ENCODE measurements at regions of chr7 and their contacts with region 1.

Region 1: GRCh38 chr7:87628780-87629569 is 777 bp downstream of the RUNDC3B start:
- DNase-seq: peak; percentile 44
- ATAC-seq: peak; percentile 18
- H3K4me3 Mint-ChIP-seq: peak overlapping the region; percentile 83
- H3K27ac Mint-ChIP-seq: no peak overlapping the region
- H3K4me1 Mint-ChIP-seq: peaks cover 11% of the 10 kb centered on the region
- H3K27me3 Mint-ChIP-seq: peaks cover 8% of the 10 kb centered on the region
- CTCF ChIP-seq: no peak

Region 2: GRCh38 chr7:87345166-87345927 is 283.6 kb before region 1 on chr7 and contains the start of gene CROT:
- CTCF ChIA-PET with region 1: no interaction called
- POLR2A ChIA-PET with region 1: no interaction called
- intact Hi-C with region 1: loop called (anchors 1 kb)
- DNase-seq: peak; percentile 95
- ATAC-seq: peak; percentile 98
- H3K4me3 Mint-ChIP-seq: peak within 1 kb of the TSS; percentile 96
- H3K27ac Mint-ChIP-seq: peak within 1 kb of the TSS; percentile 96
- H3K4me1 Mint-ChIP-seq: peaks cover 25% of the 10 kb centered on the region
- H3K27me3 Mint-ChIP-seq: no peaks in the 10 kb centered on the region
- CTCF ChIP-seq: no peak
- total RNA-seq, gene CROT: 7.9 and 9.2 TPM in 2 replicates

Region 3: DNA sequence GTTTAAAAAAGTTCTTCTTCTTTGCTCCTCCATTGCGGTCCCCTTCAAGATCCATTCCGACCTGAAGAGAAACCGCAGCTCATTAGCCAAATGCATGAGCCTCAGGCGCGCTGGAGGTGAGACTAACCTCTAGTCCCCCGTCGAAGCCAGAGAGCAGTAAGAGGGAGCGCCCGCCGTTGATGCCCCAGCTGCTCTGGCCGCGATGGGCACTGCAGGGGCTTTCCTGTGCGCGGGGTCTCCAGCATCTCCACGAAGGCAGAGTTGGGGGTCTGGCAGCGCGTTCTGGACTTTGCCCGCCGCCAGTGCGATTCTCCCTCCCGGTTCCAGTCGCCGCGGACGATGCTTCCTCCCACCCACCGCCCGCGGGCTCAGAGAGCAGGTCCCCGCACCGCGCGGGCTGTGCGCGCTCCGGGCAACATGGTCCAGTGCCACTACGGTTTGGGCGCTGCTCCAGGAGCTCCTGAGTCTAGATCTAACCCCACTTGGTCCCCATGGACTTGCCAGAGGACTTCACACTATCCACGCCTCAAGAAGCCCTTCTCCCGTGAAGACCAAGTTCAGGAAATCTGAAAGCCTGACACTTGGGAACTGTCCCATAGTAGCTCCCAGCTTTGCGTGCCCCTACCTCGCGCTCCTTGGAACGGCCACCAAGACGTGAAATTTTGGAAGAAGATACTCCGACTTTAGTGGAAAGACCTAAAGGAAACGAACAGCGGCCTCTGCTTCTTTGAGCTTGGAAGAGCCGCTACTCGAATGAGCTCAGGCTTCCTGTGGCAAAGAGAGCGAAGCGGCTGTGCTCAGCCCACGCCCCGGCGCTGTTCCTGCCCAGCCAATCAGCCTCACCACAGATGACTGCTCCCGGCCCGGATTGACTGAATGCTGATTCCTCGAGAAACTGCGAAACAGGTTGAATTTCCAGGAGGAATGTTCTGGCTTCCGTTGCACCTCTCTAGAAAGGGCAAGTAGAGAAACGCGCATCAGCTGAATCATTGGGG is 28.5 kb before region 1 on chr7 and contains the start of gene ABCB1:
- CTCF ChIA-PET with region 1: interaction called, 4 read pairs
- POLR2A ChIA-PET with region 1: interaction called, 12 read pairs
- intact Hi-C with region 1: loop called (anchors 1 kb)
- DNase-seq: peak; percentile 37
- ATAC-seq: peak; percentile 73
- H3K4me3 Mint-ChIP-seq: peak within 1 kb of the TSS; percentile 89
- H3K27ac Mint-ChIP-seq: peak within 1 kb of the TSS; percentile 76
- H3K4me1 Mint-ChIP-seq: peaks cover 22% of the 10 kb centered on the region
- H3K27me3 Mint-ChIP-seq: peaks cover 33% of the 10 kb centered on the region
- CTCF ChIP-seq: no peak
- total RNA-seq, gene ABCB1: 4.1 and 4.7 TPM in 2 replicates

Region 4: GRCh38 chr7:87933945-87934698 is 305.1 kb after region 1 on chr7 and contains the start of gene ADAM22:
- CTCF ChIA-PET with region 1: no interaction called
- POLR2A ChIA-PET with region 1: no interaction called
- intact Hi-C with region 1: loop called (anchors 2 kb)
- DNase-seq: peak; percentile 68
- ATAC-seq: peak; percentile 97
- H3K4me3 Mint-ChIP-seq: peak within 1 kb of the TSS; percentile 89
- H3K27ac Mint-ChIP-seq: peak within 1 kb of the TSS; percentile 32
- H3K4me1 Mint-ChIP-seq: peaks cover 14% of the 10 kb centered on the region
- H3K27me3 Mint-ChIP-seq: peaks cover 11% of the 10 kb centered on the region
- CTCF ChIP-seq: no peak
- total RNA-seq, gene ADAM22: 0.71 and 0.88 TPM in 2 replicates

Region 5: DNA sequence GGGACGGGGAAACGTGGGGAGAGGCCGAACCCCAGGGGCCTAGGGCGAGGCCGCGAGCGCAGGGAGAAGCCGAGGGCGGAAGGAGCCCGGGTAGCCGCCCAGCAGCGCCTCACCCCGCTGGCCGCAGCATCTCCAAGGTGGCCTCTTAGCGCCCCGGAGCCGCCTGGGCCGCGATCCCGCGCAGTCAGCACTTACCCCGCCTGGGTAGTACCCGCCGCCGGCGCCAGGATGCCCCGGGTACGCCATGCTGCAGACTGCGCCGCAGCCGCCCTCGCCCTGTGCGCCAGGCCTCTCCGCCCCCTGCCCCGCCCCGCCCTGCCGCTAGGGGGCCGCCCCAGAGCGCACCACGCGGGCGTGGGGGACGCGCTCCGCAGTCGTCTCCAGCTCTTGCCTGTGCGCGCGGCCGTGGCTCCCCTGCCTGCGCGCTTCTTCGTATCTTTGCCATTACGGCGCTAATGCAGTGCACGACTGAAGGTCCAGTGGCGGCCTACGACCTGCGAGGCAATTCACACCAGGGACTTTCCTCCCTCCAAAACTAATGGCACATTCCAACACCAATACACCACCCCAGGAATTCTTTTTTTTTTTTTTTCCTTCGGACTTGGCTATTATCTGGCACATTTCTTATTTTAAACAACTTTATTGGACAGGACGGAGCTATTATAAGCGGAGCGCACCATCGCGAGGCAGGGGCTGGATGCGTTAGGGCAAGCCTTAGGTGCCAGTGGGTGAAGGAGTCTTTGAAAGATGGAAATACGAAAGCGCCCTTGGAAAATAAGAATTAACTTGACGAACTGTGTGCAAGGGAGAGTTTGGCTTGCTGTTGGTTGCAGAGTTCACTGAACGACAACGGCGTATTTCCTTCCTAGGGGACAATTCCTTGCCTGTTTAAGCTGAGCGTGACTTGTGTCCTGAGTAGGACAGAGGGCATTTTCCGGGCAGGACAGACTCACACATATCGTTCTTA is 591.1 kb after region 1 on chr7 and contains the start of gene SRI:
- CTCF ChIA-PET with region 1: no interaction called
- POLR2A ChIA-PET with region 1: interaction called, 3 read pairs
- intact Hi-C with region 1: loop called (anchors 5 kb)
- DNase-seq: peak; percentile 94
- ATAC-seq: peak; percentile 96
- H3K4me3 Mint-ChIP-seq: peak within 1 kb of the TSS; percentile 95
- H3K27ac Mint-ChIP-seq: peak within 1 kb of the TSS; percentile 92
- H3K4me1 Mint-ChIP-seq: peaks cover 25% of the 10 kb centered on the region
- H3K27me3 Mint-ChIP-seq: no peaks in the 10 kb centered on the region
- CTCF ChIP-seq: peak; percentile 73
- total RNA-seq, gene SRI: 97.4 and 101 TPM in 2 replicates